ENCODE measurements at regions of chr7 and their contacts with region 1.

Region 1: GRCh38 chr7:37495574-37496184 is 47.0 kb upstream of the ELMO1 start:
- DNase-seq: no peak
- H3K4me3 ChIP-seq: no peak overlapping the region
- H3K27ac ChIP-seq: no peak overlapping the region
- H3K4me1 ChIP-seq: peaks cover 0 to 2% (median 0%) of the 10 kb centered on the region in 4 experiments; a peak in 3 of 7 replicates
- H3K27me3 ChIP-seq: no peaks in the 10 kb centered on the region
- CTCF ChIP-seq: peak in 2 of 3 experiments; percentile 29 to 49; a peak in 2 of 4 replicates
- EP300 ChIP-seq: no peak
- POLR2A ChIP-seq: no peak
- RAD21 ChIP-seq: peak; percentile 27 to 36; a peak in 2 of 4 replicates

Region 2: DNA sequence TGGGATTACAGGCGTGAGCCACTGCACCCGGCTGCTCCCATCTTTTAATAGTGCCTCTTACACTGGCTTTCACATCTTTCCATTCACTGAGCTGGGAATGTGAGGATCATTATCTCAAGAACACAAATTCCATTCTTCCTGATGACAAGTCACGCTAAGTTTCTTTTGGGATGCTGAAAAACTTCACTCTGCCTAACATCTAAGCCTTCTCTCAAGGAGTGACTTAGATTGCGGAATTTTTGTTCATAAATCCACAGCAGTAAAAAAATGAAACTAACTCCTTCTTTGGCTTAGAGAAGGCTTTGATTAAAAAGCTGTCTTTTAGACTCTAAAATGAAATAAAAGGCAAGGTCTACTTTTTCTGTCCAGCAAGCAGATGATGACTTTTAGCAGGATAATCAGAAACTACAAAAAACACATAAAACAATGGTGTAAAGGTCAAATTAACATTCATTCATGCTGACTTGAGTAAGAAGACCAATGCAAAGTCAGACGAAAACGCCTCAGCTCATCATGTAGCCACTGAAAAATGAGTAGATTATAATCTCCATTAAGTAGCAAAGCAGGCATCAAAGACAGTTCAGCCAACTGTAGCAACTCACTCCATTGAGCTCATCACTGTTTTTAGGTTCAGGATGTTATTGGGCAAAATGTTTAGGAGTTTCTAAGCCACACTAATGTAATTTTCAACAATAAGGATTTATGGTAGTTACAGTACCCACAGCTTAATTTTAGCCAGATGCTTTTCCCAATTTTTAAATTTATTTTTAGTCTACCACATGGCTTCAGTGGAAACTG is 225.8 kb before region 1 on chr7:
- CTCF ChIA-PET with region 1: interaction called, 14 read pairs
- POLR2A ChIA-PET with region 1: no interaction called
- DNase-seq: no peak
- H3K4me3 ChIP-seq: no peak overlapping the region
- H3K27ac ChIP-seq: no peak overlapping the region
- H3K4me1 ChIP-seq: no peaks in the 10 kb centered on the region
- H3K27me3 ChIP-seq: no peaks in the 10 kb centered on the region
- CTCF ChIP-seq: no peak
- EP300 ChIP-seq: no peak
- POLR2A ChIP-seq: no peak
- RAD21 ChIP-seq: no peak

Region 3: GRCh38 chr7:37352974-37353948 is 142.4 kb before region 1 on chr7:
- CTCF ChIA-PET with region 1: interaction called, 17 read pairs
- POLR2A ChIA-PET with region 1: no interaction called
- DNase-seq: peak; percentile 17 to 55
- H3K4me3 ChIP-seq: no peak overlapping the region
- H3K27ac ChIP-seq: no peak overlapping the region
- H3K4me1 ChIP-seq: peaks cover 2 to 7% (median 5%) of the 10 kb centered on the region in 4 experiments; a peak in 5 of 7 replicates
- H3K27me3 ChIP-seq: no peaks in the 10 kb centered on the region
- CTCF ChIP-seq: peak; percentile 50 to 72 (median 65)
- EP300 ChIP-seq: no peak
- POLR2A ChIP-seq: no peak
- RAD21 ChIP-seq: peak; percentile 77 to 83

Region 4: GRCh38 chr7:37510043-37510634 is 14.5 kb after region 1 on chr7:
- CTCF ChIA-PET with region 1: interaction called, 138 read pairs
- POLR2A ChIA-PET with region 1: interaction called, 6 read pairs
- DNase-seq: no peak
- H3K4me3 ChIP-seq: no peak overlapping the region
- H3K27ac ChIP-seq: no peak overlapping the region
- H3K4me1 ChIP-seq: no peaks in the 10 kb centered on the region; a peak in 1 of 7 replicates
- H3K27me3 ChIP-seq: no peaks in the 10 kb centered on the region
- CTCF ChIP-seq: peak; percentile 36 to 77 (median 66)
- EP300 ChIP-seq: no peak
- POLR2A ChIP-seq: no peak
- RAD21 ChIP-seq: peak; percentile 74 to 77